ENCODE measurements at regions of chr19 and their contacts with region 1.

Region 1: DNA sequence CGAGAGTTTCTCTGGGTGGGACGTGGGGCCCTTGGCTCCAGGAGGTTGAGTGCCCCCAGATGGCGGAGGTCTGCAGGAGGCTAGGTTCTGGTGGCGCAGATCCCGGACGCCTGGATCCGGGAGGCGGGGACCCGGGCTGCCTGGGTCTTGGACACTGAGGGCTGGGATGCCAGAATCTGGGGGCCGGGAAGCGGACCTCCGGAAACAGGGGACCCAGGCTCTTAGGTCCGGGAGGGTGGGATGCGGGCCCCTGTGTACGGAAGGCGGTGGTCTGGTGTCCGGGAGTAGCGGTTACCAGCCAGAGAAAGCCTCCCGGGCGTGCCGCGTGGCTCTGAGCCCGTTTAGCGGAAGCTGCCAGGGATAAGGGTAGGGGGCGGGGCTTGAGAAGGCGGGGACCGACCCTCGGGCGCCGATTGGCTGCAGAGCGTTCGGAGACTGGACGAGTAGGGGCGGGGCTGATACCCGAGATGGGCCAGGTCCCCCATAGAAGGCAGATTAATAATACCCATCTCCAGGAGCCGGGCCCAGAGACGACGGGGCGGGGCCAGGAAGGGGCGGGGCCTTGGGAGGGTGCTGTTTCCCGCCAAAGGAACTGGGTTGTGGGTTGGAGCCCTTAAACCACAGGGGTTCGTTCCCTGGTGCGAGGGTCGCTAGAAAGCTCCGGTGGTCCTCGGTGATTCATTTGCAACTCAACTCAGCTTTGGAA is at the start of gene SLC1A5:
- DNase-seq: peak; percentile 99
- H3K4me3 Mint-ChIP-seq: peak within 1 kb of the TSS; percentile 98
- H3K27ac Mint-ChIP-seq: peak within 1 kb of the TSS; percentile 98
- H3K4me1 Mint-ChIP-seq: peaks cover 61% of the 10 kb centered on the region
- H3K27me3 Mint-ChIP-seq: peaks cover under 1% of the 10 kb centered on the region
- total RNA-seq, gene SLC1A5: 200 to 208 TPM

Region 2: DNA sequence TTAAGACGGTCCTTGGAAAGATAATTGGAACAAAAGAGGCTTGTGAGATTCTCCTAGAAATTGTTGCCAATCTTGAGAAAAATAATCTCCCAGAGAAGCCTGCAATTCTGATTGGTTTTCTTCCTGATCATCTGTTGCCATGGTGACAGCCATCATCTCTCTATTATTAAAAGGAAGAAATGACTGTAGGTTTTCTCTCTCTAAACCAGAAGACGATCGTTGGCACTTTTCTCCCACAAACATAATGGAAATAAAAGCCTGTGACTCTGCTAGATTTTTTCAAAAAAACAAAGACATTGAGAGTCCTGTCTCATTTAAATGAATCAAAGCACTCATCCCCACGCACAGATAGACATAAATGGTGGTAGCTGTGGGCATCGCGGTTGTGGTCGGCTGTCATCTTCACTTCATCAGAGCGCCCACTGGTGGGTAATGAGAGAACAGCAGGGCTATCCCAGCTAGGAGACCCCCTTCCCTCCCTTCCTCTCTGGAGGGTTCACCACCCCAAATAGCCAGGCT is 209.0 kb before region 1 on chr19:
- CTCF ChIA-PET with region 1: no interaction called
- POLR2A ChIA-PET with region 1: no interaction called
- DNase-seq: peak; percentile 37
- H3K4me3 Mint-ChIP-seq: no peak overlapping the region
- H3K27ac Mint-ChIP-seq: no peak overlapping the region
- H3K4me1 Mint-ChIP-seq: peaks cover 17% of the 10 kb centered on the region
- H3K27me3 Mint-ChIP-seq: peaks cover 3% of the 10 kb centered on the region

Region 3: GRCh38 chr19:46661020-46661731 is 127.2 kb before region 1 on chr19 and contains the start of gene DACT3:
- CTCF ChIA-PET with region 1: no interaction called
- POLR2A ChIA-PET with region 1: no interaction called
- DNase-seq: peak; percentile 100
- H3K4me3 Mint-ChIP-seq: peak within 1 kb of the TSS; percentile 69
- H3K27ac Mint-ChIP-seq: peak within 1 kb of the TSS; percentile 71
- H3K4me1 Mint-ChIP-seq: peaks cover 19% of the 10 kb centered on the region
- H3K27me3 Mint-ChIP-seq: peaks cover 40% of the 10 kb centered on the region
- total RNA-seq, gene DACT3: 0.15 to 0.20 TPM

Region 4: GRCh38 chr19:46717034-46717723 is 71.2 kb before region 1 on chr19 and contains the start of gene PRKD2:
- CTCF ChIA-PET with region 1: no interaction called
- POLR2A ChIA-PET with region 1: interaction called, 14 read pairs
- DNase-seq: peak; percentile 92
- H3K4me3 Mint-ChIP-seq: peak within 1 kb of the TSS; percentile 97
- H3K27ac Mint-ChIP-seq: peak within 1 kb of the TSS; percentile 95
- H3K4me1 Mint-ChIP-seq: peaks cover 45% of the 10 kb centered on the region
- H3K27me3 Mint-ChIP-seq: no peaks in the 10 kb centered on the region
- total RNA-seq, gene PRKD2: 167 to 177 TPM

Region 5: DNA sequence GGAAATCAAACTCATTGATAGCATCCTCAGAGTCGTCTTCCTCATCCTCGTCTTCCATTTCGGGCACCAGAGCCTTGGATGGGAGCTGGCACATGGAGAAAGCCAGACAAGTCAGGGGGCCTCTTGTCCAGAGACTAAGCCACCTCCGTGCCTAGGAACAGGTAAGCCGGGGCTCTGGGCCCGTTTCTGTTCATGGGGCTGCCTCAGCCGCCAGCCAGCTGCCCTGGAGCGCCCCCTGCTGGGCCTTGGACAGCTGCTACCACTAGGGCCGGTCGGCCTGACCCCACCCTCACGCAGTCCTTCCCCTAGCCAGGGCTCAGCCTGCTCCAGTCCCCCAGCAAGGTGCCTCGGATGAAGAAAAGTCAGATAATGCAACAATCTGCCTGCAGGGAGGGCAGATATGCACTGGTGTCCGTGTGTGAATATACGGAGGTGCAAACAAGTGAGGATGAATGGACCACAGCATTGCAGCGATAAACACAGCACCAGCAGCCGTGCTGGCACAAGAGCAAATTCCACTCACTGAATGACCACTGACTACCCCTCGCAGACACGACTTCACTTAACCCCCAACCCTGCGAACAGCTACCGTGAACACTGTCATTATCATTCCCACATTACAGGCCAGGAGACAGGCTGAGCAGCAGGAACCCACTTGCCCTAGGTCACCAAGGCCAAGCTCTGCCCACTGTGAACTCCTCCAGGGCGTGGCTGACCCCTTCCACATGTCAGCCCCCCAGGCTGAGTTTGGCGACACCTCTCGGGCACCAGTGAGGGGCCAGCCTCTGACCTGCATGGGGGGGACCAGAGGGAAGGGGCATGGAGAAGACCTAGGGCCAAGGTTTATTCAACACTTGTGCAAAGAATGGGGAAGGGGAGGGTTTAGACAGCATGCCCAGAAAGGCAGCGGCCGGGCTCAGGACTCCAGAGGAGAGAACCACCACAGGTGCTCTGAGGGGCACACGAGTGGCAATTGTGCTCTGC is 59.4 kb before region 1 on chr19:
- CTCF ChIA-PET with region 1: no interaction called
- POLR2A ChIA-PET with region 1: no interaction called
- DNase-seq: peak; percentile 85
- H3K4me3 Mint-ChIP-seq: no peak overlapping the region
- H3K27ac Mint-ChIP-seq: no peak overlapping the region
- H3K4me1 Mint-ChIP-seq: peaks cover 31% of the 10 kb centered on the region
- H3K27me3 Mint-ChIP-seq: no peaks in the 10 kb centered on the region

Region 6: DNA sequence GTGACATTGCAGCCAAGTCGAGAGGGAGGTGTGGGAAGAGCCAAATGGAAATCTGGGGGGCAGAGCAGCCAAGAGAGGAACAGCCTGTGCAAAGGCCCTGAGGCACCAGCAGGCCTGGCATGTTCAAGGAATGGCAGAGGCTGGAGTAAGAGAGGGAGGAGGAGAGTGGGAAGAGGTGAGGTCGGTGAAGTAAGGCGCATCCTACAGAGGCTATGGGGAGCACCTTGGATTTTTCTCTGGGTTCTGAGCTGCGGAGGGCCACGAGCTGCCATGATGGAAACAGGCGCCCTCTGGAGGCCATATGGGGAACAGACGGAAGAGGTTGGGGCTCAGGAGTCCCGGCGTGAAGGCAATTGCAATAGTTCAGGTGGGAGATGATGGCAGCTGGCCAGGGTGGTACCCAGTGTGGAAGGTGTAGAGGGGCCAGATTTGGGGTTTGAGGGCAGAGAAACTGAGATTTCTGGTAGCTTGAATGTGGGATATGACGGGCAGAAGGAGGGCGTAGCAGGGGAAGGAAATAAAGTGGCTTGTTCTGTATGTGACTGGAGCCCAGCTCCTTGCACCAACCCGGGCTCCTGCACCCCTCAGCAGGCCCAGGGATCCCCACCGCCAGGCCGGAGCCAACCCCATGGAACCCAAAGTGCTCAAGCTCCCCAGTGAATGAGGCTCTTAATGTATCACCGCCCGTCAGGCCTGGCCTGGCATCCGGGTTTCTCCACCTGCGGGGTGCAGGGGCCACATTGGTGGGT is 21.7 kb before region 1 on chr19:
- CTCF ChIA-PET with region 1: interaction called, 29 read pairs
- POLR2A ChIA-PET with region 1: interaction called, 16 read pairs
- DNase-seq: peak; percentile 73
- H3K4me3 Mint-ChIP-seq: no peak overlapping the region
- H3K27ac Mint-ChIP-seq: no peak overlapping the region
- H3K4me1 Mint-ChIP-seq: peaks cover 4% of the 10 kb centered on the region
- H3K27me3 Mint-ChIP-seq: no peaks in the 10 kb centered on the region

Region 7: DNA sequence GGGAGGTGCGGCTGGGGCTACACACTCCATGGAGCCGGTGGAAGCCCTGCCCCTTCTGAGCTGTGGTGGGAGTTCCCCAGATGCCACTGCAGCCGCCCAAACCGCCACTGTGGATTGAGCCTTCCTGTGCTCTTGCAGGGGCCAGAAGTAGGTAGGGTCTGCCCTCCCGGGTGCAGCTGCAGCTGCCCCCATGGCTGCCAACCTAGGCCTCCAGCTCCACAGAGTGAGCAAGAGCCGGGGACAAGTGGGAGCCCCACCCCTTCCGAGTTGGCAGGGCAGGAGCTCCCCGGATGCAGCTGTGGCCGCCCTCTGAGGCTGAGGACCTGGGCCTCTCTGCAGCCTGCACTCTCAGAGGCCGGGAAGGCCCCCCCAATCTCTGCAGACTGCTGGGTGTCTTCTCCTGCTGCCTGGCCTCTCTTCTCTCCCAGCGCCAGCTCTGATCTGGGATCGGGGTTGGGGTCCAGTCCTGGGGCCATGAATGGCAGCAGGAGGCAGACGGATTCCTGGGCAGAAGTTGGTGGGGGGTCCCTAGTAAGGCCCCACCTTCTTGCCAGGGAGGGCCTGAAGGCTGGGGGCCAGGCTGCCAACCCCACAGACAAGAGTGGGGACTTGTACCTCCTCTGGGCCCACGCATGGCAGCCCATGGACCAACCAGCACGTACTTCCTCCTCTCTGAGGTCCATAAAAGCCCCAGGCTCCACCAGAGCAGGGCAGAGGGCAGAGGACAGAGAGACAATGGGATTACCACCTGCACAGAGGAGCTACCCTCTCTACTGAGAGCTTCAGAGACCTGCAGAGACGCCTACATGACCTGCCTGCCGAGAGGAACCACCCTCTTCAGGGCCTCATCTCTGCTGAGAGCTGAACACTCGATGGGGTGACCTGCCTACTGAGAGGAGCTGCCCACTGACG is 33.3 kb after region 1 on chr19:
- CTCF ChIA-PET with region 1: interaction called, 7 read pairs
- POLR2A ChIA-PET with region 1: interaction called, 25 read pairs
- DNase-seq: peak; percentile 78
- H3K4me3 Mint-ChIP-seq: no peak overlapping the region
- H3K27ac Mint-ChIP-seq: peak overlapping the region; percentile 85
- H3K4me1 Mint-ChIP-seq: peaks cover 50% of the 10 kb centered on the region
- H3K27me3 Mint-ChIP-seq: no peaks in the 10 kb centered on the region

Region 8: GRCh38 chr19:46954993-46955812 is 166.8 kb after region 1 on chr19:
- CTCF ChIA-PET with region 1: no interaction called
- POLR2A ChIA-PET with region 1: interaction called, 19 read pairs
- DNase-seq: peak; percentile 49
- H3K4me3 Mint-ChIP-seq: peak overlapping the region; percentile 75
- H3K27ac Mint-ChIP-seq: peak overlapping the region; percentile 99
- H3K4me1 Mint-ChIP-seq: peaks cover 79% of the 10 kb centered on the region
- H3K27me3 Mint-ChIP-seq: no peaks in the 10 kb centered on the region